ENCODE measurements at regions of chr6 and their contacts with region 1.

Region 1: GRCh38 chr6:33711140-33712129 is at the start of gene UQCC2:
- DNase-seq: peak; percentile 100
- H3K4me3 Mint-ChIP-seq: peak within 1 kb of the TSS; percentile 96
- H3K27ac Mint-ChIP-seq: peak within 1 kb of the TSS; percentile 97
- H3K4me1 Mint-ChIP-seq: peaks cover 51% of the 10 kb centered on the region
- H3K27me3 Mint-ChIP-seq: no peaks in the 10 kb centered on the region
- CTCF ChIP-seq: peak; percentile 94
- total RNA-seq, gene UQCC2: 142 and 145 TPM in 2 replicates

Region 2: DNA sequence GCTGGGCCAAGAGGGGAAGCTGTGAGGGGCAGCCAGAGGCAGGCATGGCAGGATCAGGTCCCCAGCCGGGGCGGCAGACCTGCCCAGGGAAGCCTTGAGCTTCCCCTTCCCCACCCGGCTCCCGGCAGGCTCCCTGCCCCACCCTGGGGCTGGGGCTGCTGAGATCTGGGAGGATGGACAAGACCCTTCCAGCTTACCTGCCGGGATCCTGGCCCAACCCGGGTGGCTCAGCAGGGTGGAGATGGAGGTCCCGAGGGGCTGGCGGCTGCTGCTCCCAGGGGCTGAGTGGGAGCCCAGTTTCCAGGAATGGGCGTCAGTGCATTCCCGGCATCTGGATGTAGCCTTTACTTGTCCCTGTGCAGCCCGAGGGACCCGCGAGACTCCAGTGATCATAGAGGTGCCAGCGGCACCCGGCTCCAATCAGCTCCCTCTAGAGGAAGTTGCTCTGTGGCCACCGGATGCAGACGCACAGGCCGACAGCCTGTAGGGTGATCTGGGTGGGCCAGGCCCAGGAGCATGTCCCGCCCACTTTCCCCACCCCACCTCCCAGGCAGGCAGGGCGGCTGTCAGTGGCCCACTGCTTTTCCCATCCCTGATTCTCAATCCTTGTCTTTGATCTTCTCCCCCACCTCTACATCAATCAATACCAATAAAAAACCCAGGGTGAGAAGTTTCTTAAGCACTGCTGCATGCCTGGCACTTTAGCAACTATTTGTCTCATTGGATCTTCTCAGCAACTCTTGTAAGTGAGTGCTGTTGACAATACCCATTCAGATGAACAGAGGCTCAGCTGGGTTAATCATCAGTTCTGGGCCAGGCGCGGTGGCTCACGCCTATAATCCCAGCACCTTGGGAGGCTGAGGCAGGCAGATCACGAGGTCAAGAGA is 131.4 kb before region 1 on chr6 and contains the start of gene BAK1:
- CTCF ChIA-PET with region 1: interaction called, 12 read pairs
- intact Hi-C with region 1: no loop called
- DNase-seq: peak; percentile 96
- H3K4me3 Mint-ChIP-seq: peak within 1 kb of the TSS; percentile 98
- H3K27ac Mint-ChIP-seq: peak within 1 kb of the TSS; percentile 69
- H3K4me1 Mint-ChIP-seq: peaks cover 32% of the 10 kb centered on the region
- H3K27me3 Mint-ChIP-seq: no peaks in the 10 kb centered on the region
- CTCF ChIP-seq: peak; percentile 69
- total RNA-seq, gene BAK1: 31.6 and 44.1 TPM in 2 replicates

Region 3: DNA sequence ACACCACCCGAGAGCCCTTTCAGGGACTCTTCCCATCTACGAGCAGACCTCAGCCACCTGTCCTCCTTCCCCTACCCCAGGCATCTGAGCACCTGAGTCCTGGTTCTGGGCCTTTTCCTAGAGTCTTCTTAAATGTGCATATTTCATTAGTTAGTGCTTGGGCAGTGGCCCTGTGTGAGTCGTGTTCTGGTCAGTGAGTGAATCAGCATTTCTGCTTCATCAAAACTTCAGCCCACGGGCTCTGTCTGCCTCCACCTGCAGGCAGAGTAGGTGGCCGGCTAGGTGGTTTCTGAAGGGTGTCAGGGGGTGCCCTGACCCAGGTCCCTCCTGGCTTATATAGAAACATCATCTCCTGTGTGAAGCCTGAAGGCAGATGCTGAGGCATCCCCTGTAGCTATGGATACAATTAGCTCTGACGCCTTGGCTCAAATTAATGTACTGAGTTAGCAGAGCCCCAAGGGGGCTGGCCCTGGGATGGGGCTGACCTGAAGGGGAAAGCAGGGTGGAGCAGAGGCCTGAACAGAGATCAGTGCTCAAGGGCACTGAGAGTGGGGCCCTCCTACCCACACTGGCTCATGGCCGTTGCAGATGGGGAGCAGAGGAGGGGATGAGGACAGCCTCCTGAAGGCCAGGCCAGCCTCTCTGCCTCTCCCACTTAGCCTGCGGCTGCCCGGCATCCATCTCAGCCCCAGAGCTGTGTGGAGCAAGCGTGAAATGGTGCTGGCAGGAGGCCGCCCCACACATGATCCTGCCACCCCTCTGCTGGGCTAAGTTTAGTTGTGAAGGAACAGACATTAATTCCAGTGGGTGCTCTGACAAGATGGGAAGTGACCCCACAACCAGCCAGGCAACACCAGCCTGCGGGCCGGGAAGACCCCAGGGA is 21.6 kb after region 1 on chr6:
- CTCF ChIA-PET with region 1: interaction called, 16 read pairs
- intact Hi-C with region 1: no loop called
- DNase-seq: no peak
- H3K4me3 Mint-ChIP-seq: no peak overlapping the region
- H3K27ac Mint-ChIP-seq: peak overlapping the region; percentile 50
- H3K4me1 Mint-ChIP-seq: peaks cover 37% of the 10 kb centered on the region
- H3K27me3 Mint-ChIP-seq: no peaks in the 10 kb centered on the region
- CTCF ChIP-seq: no peak

Region 4: DNA sequence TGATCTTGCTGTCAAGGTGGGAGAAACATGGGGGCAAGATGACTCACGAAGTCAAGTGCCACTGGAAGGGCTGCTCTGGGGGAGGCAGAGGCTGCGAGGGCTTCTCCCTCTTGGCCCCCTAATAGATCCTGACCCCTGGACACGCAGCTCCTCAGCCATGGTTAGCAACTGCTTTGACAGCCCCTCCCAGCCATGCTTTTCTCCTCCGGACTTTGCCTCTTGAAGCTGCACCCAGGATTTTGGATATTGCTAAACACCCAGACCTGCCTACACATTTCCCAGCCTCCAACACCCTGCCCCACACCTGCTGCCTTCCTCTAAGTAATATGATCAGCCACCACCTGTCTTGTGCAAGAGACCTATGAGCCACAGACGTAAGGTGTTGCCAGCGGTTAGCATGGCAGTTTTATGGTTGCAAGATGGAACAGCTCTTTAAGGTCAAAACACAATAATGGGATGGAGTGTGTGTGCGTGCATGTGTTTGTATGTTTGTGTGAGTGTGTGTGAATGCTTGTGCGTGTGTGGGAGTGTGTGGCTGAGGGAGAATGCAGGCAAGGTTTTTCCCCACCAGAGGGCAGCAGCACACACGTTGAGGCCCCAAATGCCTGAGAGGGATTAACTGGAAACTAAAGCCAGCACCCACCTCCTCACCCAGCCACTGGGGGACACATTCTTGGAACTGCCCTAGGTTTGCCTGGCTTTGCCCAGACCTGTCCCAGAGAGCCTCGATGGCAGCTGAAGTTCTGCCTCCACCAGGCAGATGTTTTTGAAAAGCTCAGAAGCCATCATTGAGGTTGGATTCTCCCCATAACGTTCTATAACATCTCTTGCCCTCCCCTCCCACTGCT is 32.8 kb after region 1 on chr6:
- CTCF ChIA-PET with region 1: interaction called, 29 read pairs
- intact Hi-C with region 1: loop called (anchors 1 kb)
- DNase-seq: peak; percentile 89
- H3K4me3 Mint-ChIP-seq: peak overlapping the region; percentile 35
- H3K27ac Mint-ChIP-seq: peak overlapping the region; percentile 15
- H3K4me1 Mint-ChIP-seq: peaks cover 39% of the 10 kb centered on the region
- H3K27me3 Mint-ChIP-seq: peaks cover 24% of the 10 kb centered on the region
- CTCF ChIP-seq: peak; percentile 99

Region 5: DNA sequence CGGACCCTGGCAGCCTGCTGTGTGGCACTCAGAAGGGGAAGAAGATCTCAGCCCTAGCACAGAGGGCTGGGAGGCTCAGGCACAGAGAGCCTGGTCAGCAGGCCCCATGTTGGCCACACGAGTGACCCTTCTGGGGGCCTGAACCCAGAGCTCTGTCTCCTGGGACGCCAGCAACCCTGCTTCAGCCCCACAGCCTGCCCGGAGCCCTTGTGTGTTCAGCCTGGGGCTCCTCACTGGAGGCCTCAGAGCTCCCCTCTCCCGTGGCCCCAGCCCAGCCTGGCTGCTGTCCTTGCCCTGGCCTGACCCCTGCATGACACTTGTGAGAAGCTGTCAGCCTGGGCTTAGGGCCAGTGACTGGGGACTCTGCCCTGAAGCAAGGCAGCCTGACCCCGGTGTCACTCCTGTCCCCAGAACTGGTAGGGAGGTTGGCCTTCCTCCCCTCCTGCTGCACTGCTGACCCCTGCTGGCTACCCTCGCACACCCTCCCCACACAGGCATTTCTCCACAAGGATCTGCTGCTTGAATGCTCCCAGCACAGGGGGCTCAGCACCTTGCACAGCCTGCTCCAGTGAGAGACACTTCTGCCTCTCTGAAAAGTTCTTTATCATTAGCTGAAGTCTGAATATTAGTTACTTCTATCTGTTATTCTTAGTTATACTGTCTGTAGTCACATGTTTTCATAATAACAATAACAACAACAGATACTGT is 50.6 kb after region 1 on chr6:
- CTCF ChIA-PET with region 1: interaction called, 89 read pairs
- intact Hi-C with region 1: loop called (anchors 1 kb)
- DNase-seq: peak; percentile 91
- H3K4me3 Mint-ChIP-seq: no peak overlapping the region
- H3K27ac Mint-ChIP-seq: no peak overlapping the region
- H3K4me1 Mint-ChIP-seq: peaks cover 19% of the 10 kb centered on the region
- H3K27me3 Mint-ChIP-seq: peaks cover 41% of the 10 kb centered on the region
- CTCF ChIP-seq: peak; percentile 94

Region 6: GRCh38 chr6:33827546-33828451 is 116.4 kb after region 1 on chr6:
- CTCF ChIA-PET with region 1: no interaction called
- intact Hi-C with region 1: no loop called
- DNase-seq: no peak
- H3K4me3 Mint-ChIP-seq: no peak overlapping the region
- H3K27ac Mint-ChIP-seq: no peak overlapping the region
- H3K4me1 Mint-ChIP-seq: no peaks in the 10 kb centered on the region
- H3K27me3 Mint-ChIP-seq: peaks cover 93% of the 10 kb centered on the region
- CTCF ChIP-seq: peak; percentile 15

Region 7: DNA sequence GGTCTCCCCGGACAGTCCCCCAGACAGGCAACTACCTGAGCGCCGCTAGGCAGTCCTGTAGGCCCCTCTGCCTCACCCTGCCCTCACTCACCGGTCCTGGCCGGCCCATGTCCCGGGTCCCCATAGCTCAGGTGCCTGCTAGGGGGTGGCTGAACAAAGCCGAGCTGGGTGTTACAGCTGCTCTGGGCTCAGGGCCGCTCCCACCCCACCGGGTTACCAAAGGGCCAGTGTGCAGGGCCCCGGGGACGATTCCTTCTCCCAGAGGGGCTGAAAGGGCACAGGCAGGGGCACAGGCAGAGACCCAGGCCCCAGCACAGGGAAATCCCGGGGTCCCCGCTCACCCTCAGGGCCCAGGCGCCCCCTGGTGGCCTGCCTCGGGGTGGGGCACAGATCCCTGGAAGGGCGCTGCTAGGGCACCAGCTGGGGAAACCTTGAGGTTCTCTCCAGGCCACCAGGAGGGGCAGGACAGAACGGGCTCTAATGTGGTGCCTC is 316.1 kb after region 1 on chr6:
- CTCF ChIA-PET with region 1: interaction called, 17 read pairs
- intact Hi-C with region 1: loop called (anchors 5 kb)
- DNase-seq: peak; percentile 82
- H3K4me3 Mint-ChIP-seq: no peak overlapping the region
- H3K27ac Mint-ChIP-seq: no peak overlapping the region
- H3K4me1 Mint-ChIP-seq: peaks cover under 1% of the 10 kb centered on the region
- H3K27me3 Mint-ChIP-seq: peaks cover 79% of the 10 kb centered on the region
- CTCF ChIP-seq: peak; percentile 97

Region 8: GRCh38 chr6:34145161-34146020 is 434.0 kb after region 1 on chr6:
- CTCF ChIA-PET with region 1: interaction called, 4 read pairs
- intact Hi-C with region 1: loop called (anchors 10 kb)
- DNase-seq: peak; percentile 63
- H3K4me3 Mint-ChIP-seq: peak overlapping the region; percentile 78
- H3K27ac Mint-ChIP-seq: no peak overlapping the region
- H3K4me1 Mint-ChIP-seq: peaks cover 9% of the 10 kb centered on the region
- H3K27me3 Mint-ChIP-seq: peaks cover 100% of the 10 kb centered on the region
- CTCF ChIP-seq: no peak